ENCODE measurements at regions of chr5 and their contacts with region 1.

Region 1: GRCh38 chr5:111550279-111551020 is 38.1 kb upstream of the STARD4 start:
- DNase-seq: peak; percentile 69 to 84
- H3K4me3 ChIP-seq: no peak overlapping the region
- H3K4me3 Mint-ChIP-seq: no peak overlapping the region
- H3K27ac Mint-ChIP-seq: no peak overlapping the region
- H3K4me1 ChIP-seq: no peaks in the 10 kb centered on the region
- H3K4me1 Mint-ChIP-seq: no peaks in the 10 kb centered on the region
- H3K27me3 ChIP-seq: no peaks in the 10 kb centered on the region
- H3K27me3 Mint-ChIP-seq: peaks cover 2% of the 10 kb centered on the region
- CTCF ChIP-seq: peak; percentile 44 to 70

Region 2: GRCh38 chr5:111512375-111513130 is 37.9 kb before region 1 on chr5 and contains the start of gene STARD4:
- CTCF ChIA-PET with region 1: no interaction called
- POLR2A ChIA-PET with region 1: no interaction called
- intact Hi-C with region 1: loop called (anchors 2 kb)
- DNase-seq: peak; percentile 98 to 99
- H3K4me3 ChIP-seq: peak within 1 kb of the TSS; percentile 68
- H3K4me3 Mint-ChIP-seq: peak within 1 kb of the TSS; percentile 95
- H3K27ac Mint-ChIP-seq: peak within 1 kb of the TSS; percentile 95
- H3K4me1 ChIP-seq: peaks cover 46% of the 10 kb centered on the region
- H3K4me1 Mint-ChIP-seq: peaks cover 46% of the 10 kb centered on the region
- H3K27me3 ChIP-seq: no peaks in the 10 kb centered on the region
- H3K27me3 Mint-ChIP-seq: no peaks in the 10 kb centered on the region
- CTCF ChIP-seq: no peak
- total RNA-seq, gene STARD4: 102 and 113 TPM in 2 replicates

Region 3: DNA sequence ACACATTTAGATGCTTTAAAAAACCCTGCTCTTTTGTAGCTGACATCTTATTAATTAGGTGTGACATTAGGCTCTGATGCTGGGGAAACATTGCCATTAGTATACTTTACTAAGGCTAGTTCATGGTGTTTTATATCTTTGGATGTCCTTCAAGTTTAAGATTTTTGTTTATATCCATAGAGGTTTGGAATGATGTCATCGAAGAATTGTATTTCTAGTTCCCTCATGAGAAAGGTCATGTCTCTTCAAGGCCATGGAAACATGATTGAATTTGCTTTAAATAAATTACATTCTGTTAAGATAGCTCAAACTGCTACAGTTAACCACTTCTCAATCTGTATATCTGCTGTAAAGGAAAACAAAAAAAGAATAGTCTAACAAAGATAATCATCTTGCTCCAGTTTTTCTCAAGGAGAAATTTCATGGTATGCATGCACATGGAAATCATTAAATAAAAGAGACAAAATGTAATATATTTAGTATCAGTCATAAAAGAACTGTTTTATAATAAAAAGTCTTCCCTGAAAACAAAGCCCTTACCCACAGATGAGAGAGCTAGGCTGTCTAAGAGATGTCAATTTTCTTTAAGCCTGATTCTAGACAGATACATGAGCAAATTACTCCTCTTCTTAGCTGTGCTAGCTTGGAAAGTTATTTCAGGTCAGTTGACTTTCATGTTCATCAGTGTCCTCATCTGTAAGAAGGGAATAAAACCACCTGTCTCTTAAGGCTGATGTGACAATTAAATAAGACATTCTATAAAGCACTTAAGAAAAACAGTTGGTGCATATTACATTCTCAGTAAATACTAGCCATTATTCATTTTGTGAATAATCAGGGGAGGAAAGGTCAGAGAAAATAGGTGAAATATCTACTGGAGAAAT is 13.1 kb before region 1 on chr5:
- CTCF ChIA-PET with region 1: no interaction called
- POLR2A ChIA-PET with region 1: no interaction called
- intact Hi-C with region 1: no loop called
- DNase-seq: no peak
- H3K4me3 ChIP-seq: no peak overlapping the region
- H3K4me3 Mint-ChIP-seq: no peak overlapping the region
- H3K27ac Mint-ChIP-seq: no peak overlapping the region
- H3K4me1 ChIP-seq: no peaks in the 10 kb centered on the region
- H3K4me1 Mint-ChIP-seq: no peaks in the 10 kb centered on the region
- H3K27me3 ChIP-seq: no peaks in the 10 kb centered on the region
- H3K27me3 Mint-ChIP-seq: peaks cover 6% of the 10 kb centered on the region
- CTCF ChIP-seq: no peak

Region 4: DNA sequence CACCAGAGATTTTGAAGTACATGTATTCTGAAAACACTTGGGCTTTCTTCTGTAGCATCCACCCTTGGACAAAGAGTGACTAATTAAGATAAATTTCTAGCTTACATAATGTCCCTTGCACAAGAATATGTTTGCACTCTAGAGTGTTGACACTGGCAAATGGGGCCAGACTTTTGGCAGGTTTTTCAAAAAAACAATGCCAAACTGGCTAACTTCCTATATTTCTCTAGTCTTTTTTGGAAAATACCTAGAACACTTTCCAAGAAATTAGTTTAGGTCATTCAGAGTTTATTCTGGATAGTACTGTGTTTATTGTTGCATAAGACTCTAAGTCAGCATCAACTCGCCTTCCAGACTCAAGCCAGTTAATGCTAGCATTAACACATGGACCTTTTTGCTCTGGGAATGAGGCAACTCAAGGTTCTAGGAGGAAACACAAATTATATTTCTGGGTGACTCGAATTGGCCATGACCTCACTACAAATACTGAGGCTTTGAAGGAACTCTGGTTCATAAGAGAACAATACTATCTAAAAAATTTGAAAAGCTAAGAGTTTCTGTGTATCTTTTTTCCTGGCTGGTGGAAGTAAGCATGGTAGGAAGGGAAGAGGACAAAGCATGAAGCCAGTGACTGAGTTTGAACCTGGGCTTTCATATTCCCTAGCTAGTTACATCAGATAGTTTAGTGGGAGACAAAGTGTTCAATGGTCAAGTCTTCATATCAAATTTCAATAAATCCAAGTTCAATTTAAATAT is 104.9 kb after region 1 on chr5:
- CTCF ChIA-PET with region 1: no interaction called
- POLR2A ChIA-PET with region 1: no interaction called
- intact Hi-C with region 1: loop called (anchors 5 kb)
- DNase-seq: no peak
- H3K4me3 ChIP-seq: no peak overlapping the region
- H3K4me3 Mint-ChIP-seq: no peak overlapping the region
- H3K27ac Mint-ChIP-seq: no peak overlapping the region
- H3K4me1 ChIP-seq: peaks cover 5% of the 10 kb centered on the region
- H3K4me1 Mint-ChIP-seq: no peaks in the 10 kb centered on the region
- H3K27me3 ChIP-seq: no peaks in the 10 kb centered on the region
- H3K27me3 Mint-ChIP-seq: peaks cover 2% of the 10 kb centered on the region
- CTCF ChIP-seq: no peak

Region 5: DNA sequence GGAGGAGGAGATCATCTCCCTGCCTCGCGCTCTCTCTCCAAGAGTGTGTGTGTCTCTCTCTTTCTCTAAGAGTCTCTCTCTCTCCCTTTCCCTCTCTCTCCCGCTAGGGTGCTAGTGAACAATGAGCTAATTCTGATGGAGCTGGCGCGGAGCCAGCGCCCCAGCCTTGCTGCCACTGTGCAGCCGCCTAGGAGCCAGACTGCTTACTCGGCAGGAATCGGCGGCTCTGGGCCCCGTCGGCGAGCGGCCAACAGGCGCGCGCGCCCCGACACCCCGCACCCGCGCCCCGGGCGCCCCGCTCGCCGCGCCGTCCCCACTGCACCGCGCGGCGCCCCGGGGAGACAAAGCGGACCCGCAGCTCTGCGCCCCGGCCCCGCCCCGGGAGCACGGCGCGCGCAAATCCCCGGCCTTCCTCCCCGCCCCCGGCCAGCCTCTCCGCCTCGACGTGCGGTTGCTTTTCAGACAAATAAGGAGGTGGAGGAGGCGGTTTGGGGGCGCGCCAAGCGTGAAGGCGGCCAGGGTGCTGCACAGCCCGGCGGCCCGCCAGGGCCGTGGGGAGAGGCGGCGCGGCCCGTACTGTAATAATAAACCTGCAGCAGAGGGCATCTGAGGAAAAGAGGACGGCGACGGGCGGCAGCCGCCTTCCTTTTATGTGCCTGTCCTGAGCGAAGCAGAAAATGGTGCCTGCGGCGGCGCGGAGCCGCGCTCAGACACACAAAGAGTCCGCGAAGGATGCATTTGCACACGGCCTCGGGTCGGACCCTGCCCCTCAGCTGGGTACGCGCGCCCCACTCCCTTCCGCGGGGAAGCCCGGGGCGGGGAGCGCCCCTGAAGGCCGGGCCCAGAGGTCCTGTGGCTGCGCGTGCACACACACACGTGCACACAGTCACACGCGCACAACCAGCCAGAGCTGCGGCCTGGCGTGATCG is 207.2 kb after region 1 on chr5:
- CTCF ChIA-PET with region 1: no interaction called
- POLR2A ChIA-PET with region 1: no interaction called
- intact Hi-C with region 1: loop called (anchors 5 kb)
- DNase-seq: peak; percentile 72 to 74
- H3K4me3 ChIP-seq: peak overlapping the region; percentile 46
- H3K4me3 Mint-ChIP-seq: peak overlapping the region; percentile 73
- H3K27ac Mint-ChIP-seq: peak overlapping the region; percentile 82
- H3K4me1 ChIP-seq: peaks cover 11% of the 10 kb centered on the region; the same call in 1 of the 2 replicates
- H3K4me1 Mint-ChIP-seq: peaks cover 4% of the 10 kb centered on the region
- H3K27me3 ChIP-seq: peaks cover 1% of the 10 kb centered on the region; the same call in 1 of the 2 replicates
- H3K27me3 Mint-ChIP-seq: peaks cover 18% of the 10 kb centered on the region
- CTCF ChIP-seq: peak; percentile 9 to 38

Region 6: DNA sequence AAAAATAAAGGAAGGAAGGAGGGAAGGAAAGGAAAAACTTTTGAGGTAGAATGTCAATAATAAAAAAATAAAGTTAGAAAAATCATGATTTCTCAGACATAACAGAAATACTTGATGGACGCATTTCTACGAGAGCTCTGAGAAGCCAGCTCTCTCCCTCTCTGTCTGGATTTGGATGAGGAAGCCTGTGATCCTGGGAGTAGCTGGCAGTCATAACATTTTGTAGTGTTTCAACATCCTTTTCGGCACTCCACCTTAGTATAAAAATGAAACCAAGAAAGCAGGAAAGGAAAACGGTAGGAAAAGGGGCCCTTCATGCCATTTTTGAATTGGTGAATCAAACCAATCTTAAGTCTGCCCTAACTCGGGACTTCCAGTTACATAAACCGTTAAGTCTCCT is 547.3 kb after region 1 on chr5:
- CTCF ChIA-PET with region 1: no interaction called
- POLR2A ChIA-PET with region 1: no interaction called
- intact Hi-C with region 1: no loop called
- DNase-seq: no peak
- H3K4me3 ChIP-seq: no peak overlapping the region
- H3K4me3 Mint-ChIP-seq: no peak overlapping the region
- H3K27ac Mint-ChIP-seq: no peak overlapping the region
- H3K4me1 ChIP-seq: no peaks in the 10 kb centered on the region
- H3K4me1 Mint-ChIP-seq: no peaks in the 10 kb centered on the region
- H3K27me3 ChIP-seq: no peaks in the 10 kb centered on the region
- H3K27me3 Mint-ChIP-seq: peaks cover 4% of the 10 kb centered on the region
- CTCF ChIP-seq: no peak